Mammary epithelial cell (primary cell): ENCODE measurements at regions of chr12 and their contacts with region 1.

Region 1: DNA sequence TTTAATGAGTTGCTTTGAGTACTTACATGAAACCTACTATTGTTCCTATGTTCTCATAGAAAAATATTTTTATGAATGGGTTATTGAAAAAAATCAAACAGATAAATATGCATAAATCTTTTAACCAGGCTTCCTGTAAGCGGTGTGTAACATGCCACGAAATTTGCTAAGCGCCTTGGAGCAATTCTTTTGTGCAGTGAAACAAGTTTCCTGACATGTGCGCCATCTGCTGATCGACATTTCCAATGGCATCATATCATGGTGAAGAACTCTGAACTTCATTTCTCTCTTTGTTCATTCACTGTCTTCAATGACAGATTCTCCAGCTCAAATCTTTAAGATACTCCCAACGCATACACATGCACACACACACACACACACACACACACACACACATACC is 145.6 kb upstream of the NAV3 start:
- DNase-seq: peak; percentile 60
- H3K4me3 ChIP-seq: peak overlapping the region in 1 of 3 experiments; percentile 25
- H3K27ac ChIP-seq: no peak overlapping the region
- H3K4me1 ChIP-seq: peaks cover 3% of the 10 kb centered on the region
- H3K27me3 ChIP-seq: no peaks in the 10 kb centered on the region
- CTCF ChIP-seq: peak; percentile 62 to 77

Region 2: DNA sequence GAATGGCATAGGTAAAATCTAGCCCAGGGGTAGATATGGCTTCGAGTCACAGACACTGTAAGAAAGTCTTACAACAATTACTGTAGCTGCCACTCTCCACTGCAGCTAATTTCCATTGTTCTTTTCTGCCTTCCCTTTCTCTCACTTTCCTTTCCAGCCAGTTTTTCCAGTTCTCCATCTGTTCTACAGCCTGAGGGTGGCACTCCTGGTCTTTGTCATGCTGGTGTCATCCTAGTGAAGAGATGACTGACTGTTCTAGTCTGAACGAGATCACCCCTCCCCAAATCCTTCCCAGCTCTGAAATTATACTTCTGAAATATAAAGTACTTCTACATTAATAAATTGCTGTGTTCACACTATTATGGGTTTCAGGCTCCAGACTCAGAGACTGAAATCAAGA is 732.1 kb before region 1 on chr12:
- CTCF ChIA-PET with region 1: no interaction called
- dilution Hi-C with region 1: no loop called
- in situ Hi-C with region 1: no loop called
- intact Hi-C with region 1: loop called (anchors 2 kb)
- DNase-seq: peak; percentile 74
- H3K4me3 ChIP-seq: no peak overlapping the region
- H3K27ac ChIP-seq: peak overlapping the region; percentile 11
- H3K4me1 ChIP-seq: peaks cover 16% of the 10 kb centered on the region
- H3K27me3 ChIP-seq: no peaks in the 10 kb centered on the region
- CTCF ChIP-seq: peak in 1 of 2 donors; percentile 56

Region 3: DNA sequence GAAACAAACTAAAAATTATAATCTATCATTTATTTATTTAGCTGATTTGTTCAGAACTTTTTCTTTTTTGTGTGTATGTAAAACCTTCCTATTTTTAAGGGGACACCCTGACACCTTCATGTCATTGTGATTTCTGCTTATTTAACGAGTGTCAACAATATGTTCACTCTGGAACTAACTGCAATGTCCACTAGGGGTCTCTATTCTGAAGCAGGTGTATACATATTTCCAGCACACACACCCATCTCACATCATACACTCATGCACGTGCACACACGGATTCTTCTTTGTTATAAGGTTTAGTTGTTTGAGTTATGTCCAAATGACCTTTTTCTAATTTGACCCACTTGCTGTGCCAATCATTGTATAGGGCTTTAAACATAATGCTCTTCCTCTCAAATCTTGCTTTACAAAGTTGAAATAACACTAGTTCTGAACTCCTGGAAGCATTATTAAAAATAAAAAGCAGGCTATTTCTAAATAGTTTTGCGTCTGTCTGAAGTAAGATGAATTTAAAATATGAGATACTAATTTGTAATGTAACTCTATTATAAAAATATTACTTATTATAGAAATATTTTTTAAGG is 635.3 kb before region 1 on chr12:
- CTCF ChIA-PET with region 1: no interaction called
- dilution Hi-C with region 1: no loop called
- in situ Hi-C with region 1: loop called in 1 of 2 experiments (anchors 25 kb)
- intact Hi-C with region 1: loop called (anchors 1 kb)
- DNase-seq: peak; percentile 52
- H3K4me3 ChIP-seq: no peak overlapping the region
- H3K27ac ChIP-seq: no peak overlapping the region
- H3K4me1 ChIP-seq: no peaks in the 10 kb centered on the region
- H3K27me3 ChIP-seq: no peaks in the 10 kb centered on the region
- CTCF ChIP-seq: peak; percentile 81

Region 4: GRCh38 chr12:77152623-77153193 is 532.4 kb before region 1 on chr12:
- CTCF ChIA-PET with region 1: no interaction called
- dilution Hi-C with region 1: no loop called
- in situ Hi-C with region 1: loop called (anchors 10 to 25 kb)
- intact Hi-C with region 1: loop called (anchors 1 kb)
- DNase-seq: peak; percentile 19
- H3K4me3 ChIP-seq: no peak overlapping the region
- H3K27ac ChIP-seq: no peak overlapping the region
- H3K4me1 ChIP-seq: peaks cover 6% of the 10 kb centered on the region
- H3K27me3 ChIP-seq: no peaks in the 10 kb centered on the region
- CTCF ChIP-seq: peak; percentile 48 to 70

Region 5: GRCh38 chr12:77521508-77522115 is 163.5 kb before region 1 on chr12:
- CTCF ChIA-PET with region 1: no interaction called
- dilution Hi-C with region 1: no loop called
- in situ Hi-C with region 1: no loop called
- intact Hi-C with region 1: no loop called
- DNase-seq: no peak
- H3K4me3 ChIP-seq: no peak overlapping the region
- H3K27ac ChIP-seq: no peak overlapping the region
- H3K4me1 ChIP-seq: no peaks in the 10 kb centered on the region
- H3K27me3 ChIP-seq: no peaks in the 10 kb centered on the region
- CTCF ChIP-seq: no peak

Region 6: DNA sequence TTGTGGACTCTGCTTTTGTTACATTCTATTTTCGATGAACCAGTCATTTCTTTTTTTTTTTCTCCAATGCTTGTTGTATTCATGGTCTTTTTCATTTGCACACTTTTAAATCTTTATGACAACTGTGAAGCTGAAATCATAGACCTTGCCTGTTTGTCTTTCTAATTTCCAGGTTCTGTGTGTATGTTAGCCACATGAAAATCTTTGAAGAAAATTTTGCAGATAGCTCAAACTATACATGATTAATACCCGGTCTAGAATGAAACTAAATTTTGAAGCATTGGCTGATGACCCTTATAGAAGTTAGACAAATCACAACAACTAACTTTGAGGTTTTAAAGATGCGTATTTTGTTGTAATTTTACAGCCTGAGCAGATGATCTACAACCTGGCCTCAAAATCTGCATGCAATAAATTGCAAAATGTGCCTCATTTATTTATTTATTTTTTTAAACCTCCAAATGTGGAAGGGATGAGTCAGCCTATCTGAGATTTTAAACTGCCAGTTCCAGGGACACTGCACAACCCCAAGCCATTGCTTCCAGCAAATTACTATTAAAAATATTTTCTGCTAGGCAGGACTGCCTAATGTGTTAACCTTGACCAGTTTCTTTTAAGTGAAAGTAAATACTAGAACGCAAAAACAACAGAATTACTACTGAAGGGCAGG is 49.2 kb after region 1 on chr12:
- CTCF ChIA-PET with region 1: no interaction called
- dilution Hi-C with region 1: no loop called
- in situ Hi-C with region 1: no loop called
- intact Hi-C with region 1: no loop called
- DNase-seq: no peak
- H3K4me3 ChIP-seq: no peak overlapping the region
- H3K27ac ChIP-seq: no peak overlapping the region
- H3K4me1 ChIP-seq: no peaks in the 10 kb centered on the region
- H3K27me3 ChIP-seq: no peaks in the 10 kb centered on the region
- CTCF ChIP-seq: no peak